HEK293T (cell line): ENCODE measurements at regions of chr15 and their contacts with region 1.

Region 1: GRCh38 chr15:78108299-78109084 is 16.1 kb downstream of the SH2D7 start:
- DNase-seq: peak; percentile 82

Region 2: GRCh38 chr15:77959432-77959879 is 149.0 kb before region 1 on chr15:
- CTCF ChIA-PET with region 1: interaction called, 19 read pairs
- POLR2A ChIA-PET with region 1: no interaction called
- DNase-seq: peak; percentile 92

Region 3: DNA sequence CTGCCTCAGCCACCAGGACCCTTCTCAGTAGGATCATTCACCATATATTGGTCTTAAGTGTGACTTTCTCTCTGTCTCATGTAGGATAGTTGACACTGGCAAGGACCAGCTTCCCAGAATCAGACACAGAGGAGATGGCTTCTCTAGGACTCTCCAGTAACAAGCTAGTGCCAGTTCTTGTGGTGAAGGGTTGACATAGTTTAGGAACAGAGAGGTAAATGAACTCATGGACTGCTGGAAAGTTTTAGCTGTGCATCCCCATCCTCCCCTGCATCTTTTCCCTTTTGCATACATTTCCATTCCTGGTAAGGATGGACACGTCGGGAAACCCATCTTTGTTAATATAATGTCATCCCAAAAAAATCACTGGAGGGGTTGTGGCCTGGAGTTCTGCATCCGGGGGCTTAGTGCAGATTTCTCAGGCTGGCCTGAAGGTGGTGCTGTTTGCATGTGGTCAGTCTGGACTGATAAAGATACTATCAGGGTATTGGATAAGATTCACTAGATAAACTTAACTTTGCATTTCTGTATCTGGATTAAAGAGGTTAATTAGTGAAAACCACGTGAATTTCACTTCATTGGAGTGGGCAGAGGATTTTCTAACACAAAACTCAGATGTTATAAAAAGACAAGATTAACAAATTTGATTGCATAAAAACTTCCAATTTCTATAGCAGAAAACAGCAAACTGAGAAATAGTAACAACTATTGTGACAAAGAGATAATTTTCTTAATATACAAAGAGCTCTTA is 141.8 kb before region 1 on chr15:
- CTCF ChIA-PET with region 1: interaction called, 15 read pairs
- POLR2A ChIA-PET with region 1: no interaction called
- DNase-seq: peak; percentile 60

Region 4: DNA sequence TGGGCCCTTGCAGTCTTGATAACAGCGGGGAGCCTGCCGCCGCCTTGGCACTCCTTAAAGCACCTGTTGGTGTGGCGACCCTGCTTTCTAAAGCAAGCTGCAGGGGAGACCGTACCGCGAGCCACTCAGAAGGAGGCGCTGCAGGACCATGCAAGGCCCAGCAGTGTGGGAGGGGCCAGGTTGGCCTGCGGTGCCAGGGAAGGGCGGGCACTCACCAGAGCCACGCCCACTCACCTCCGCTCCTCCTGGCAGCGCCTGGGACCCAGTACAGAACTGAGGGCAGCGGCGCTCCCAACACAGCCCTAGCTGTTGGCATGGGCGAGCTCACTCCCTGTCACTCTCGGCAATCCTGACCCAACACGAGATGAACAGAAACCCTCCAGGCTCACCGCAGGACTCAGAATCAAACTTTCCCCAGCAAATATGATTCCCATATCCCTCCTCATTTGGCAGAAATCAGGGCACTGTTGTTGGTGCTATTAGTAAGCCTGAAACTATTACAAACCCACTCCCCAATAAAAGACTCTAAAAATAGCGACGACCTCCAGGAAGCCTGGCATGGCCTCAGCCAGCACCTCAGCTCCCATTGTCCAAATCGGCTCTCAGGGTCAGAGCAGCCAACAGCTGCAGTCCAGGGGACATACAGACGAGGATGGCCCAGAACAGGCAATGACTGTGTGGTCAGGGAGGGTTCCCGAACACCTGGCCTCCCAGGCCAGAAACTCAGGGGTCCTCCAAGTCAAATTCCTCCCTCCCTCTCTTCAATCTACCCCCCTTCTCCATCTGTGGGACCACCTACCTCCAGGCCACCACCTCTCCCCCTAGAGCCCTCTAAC is 108.2 kb before region 1 on chr15:
- CTCF ChIA-PET with region 1: interaction called, 42 read pairs
- POLR2A ChIA-PET with region 1: no interaction called
- DNase-seq: peak; percentile 69

Region 5: GRCh38 chr15:78241007-78241406 is 132.5 kb after region 1 on chr15:
- CTCF ChIA-PET with region 1: interaction called, 16 read pairs
- POLR2A ChIA-PET with region 1: no interaction called
- DNase-seq: peak; percentile 94

Region 6: GRCh38 chr15:78315686-78316282 is 207.3 kb after region 1 on chr15:
- CTCF ChIA-PET with region 1: no interaction called
- POLR2A ChIA-PET with region 1: no interaction called
- DNase-seq: peak; percentile 66